Right cardiac atrium (tissue), 5 donors: ENCODE measurements at regions of chr14 and their contacts with region 1.

Region 1: GRCh38 chr14:105086833-105087307 is 21.6 kb upstream of the GPR132 start:
- DNase-seq: peak; percentile 78 to 94 (median 92)
- ATAC-seq: peak; percentile 62 to 66
- H3K4me3 ChIP-seq: peak overlapping the region; percentile 34
- H3K27ac ChIP-seq: no peak overlapping the region
- H3K4me1 ChIP-seq: no peaks in the 10 kb centered on the region
- H3K27me3 ChIP-seq: no peaks in the 10 kb centered on the region

Region 2: DNA sequence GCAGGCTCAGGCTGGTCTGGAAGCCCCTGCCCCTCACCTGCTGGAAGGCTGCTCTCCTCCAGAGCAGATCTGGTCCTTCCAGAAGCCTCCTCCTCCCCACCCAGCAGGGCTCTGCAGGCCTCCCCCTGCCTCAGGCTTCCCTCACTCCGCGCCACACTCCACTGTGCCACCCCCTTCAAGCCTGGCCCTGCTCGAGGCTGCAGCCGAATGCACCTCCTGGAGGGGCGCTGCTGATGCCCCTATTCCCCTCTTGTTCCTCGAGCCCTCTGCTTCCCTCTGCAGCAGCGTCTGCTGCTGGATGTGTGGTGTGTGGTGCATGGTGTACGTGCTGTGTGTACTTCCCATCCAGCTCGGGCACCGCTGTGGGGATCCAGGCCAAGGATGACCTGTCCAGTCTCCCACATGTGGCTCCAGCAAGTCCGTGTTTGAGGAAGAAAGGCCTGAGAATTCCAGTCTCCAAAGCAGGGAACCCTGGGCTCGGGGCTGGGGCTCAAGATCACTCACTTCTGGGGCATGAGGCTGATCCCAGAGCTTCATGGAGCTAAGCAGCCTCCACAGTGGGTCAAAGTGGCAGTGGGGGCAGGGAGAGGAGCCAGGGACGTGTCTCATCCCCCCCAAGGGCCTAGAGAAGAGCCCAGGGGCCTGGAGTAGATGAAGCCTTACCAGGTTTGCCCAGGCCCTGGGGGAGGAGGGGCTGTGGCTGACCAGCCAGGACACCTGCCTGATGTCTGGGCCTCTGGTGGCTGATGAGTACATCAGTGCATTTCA is 643.3 kb before region 1 on chr14:
- intact Hi-C with region 1: no loop called
- DNase-seq: no peak
- ATAC-seq: no peak
- H3K4me3 ChIP-seq: no peak overlapping the region
- H3K27ac ChIP-seq: no peak overlapping the region
- H3K4me1 ChIP-seq: no peaks in the 10 kb centered on the region
- H3K27me3 ChIP-seq: no peaks in the 10 kb centered on the region

Region 3: GRCh38 chr14:105161964-105162668 is 75.2 kb after region 1 on chr14:
- intact Hi-C with region 1: loop called in 2 of 4 experiments (anchors 5 kb)
- DNase-seq: peak in 1 of 3 donors; percentile 82
- ATAC-seq: peak; percentile 45 to 59
- H3K4me3 ChIP-seq: no peak overlapping the region
- H3K27ac ChIP-seq: no peak overlapping the region
- H3K4me1 ChIP-seq: no peaks in the 10 kb centered on the region
- H3K27me3 ChIP-seq: no peaks in the 10 kb centered on the region

Region 4: GRCh38 chr14:105203057-105203531 is 116.2 kb after region 1 on chr14:
- intact Hi-C with region 1: loop called in 1 of 4 experiments (anchors 10 kb)
- DNase-seq: peak; percentile 79 to 91 (median 91)
- ATAC-seq: peak; percentile 47 to 52
- H3K4me3 ChIP-seq: no peak overlapping the region
- H3K27ac ChIP-seq: no peak overlapping the region
- H3K4me1 ChIP-seq: peaks cover 9% of the 10 kb centered on the region
- H3K27me3 ChIP-seq: no peaks in the 10 kb centered on the region

Region 5: GRCh38 chr14:105294142-105294597 is 207.3 kb after region 1 on chr14:
- intact Hi-C with region 1: loop called in 2 of 4 experiments (anchors 5 to 10 kb)
- DNase-seq: peak; percentile 68 to 89 (median 86)
- ATAC-seq: peak; percentile 95 to 96
- H3K4me3 ChIP-seq: no peak overlapping the region
- H3K27ac ChIP-seq: peak overlapping the region; percentile 34
- H3K4me1 ChIP-seq: peaks cover 7% of the 10 kb centered on the region
- H3K27me3 ChIP-seq: no peaks in the 10 kb centered on the region